ENCODE measurements at regions of chrX and their contacts with region 1.

Region 1: DNA sequence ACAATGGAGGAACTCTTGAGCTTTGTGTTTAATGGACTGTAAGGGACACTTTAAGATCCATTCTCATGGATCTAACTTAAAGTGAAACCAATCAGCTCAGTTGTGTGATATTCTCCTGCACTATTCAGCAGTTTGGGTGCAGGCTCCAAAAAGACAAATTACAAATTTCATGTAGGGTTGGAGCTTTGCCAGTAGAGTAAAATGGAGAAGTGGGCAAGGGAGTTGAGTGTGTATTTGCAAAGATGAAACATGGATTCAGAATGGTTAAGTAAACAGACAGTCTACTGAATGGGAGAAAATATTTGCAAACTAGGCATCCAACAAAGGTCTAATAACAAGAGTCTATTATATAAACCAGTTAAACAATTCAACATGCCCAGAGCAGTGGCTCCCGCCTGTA is 21.2 kb upstream of the MID2 start:
- DNase-seq: no peak
- H3K4me3 ChIP-seq: no peak overlapping the region
- CTCF ChIP-seq: no peak
- POLR2A ChIP-seq: no peak

Region 2: GRCh38 chrX:107849740-107850421 is 45.5 kb after region 1 on chrX:
- intact Hi-C with region 1: loop called (anchors 10 kb)
- DNase-seq: no peak
- H3K4me3 ChIP-seq: no peak overlapping the region
- CTCF ChIP-seq: no peak
- POLR2A ChIP-seq: no peak